ENCODE measurements at regions of chr7 and their contacts with region 1.

Region 1: DNA sequence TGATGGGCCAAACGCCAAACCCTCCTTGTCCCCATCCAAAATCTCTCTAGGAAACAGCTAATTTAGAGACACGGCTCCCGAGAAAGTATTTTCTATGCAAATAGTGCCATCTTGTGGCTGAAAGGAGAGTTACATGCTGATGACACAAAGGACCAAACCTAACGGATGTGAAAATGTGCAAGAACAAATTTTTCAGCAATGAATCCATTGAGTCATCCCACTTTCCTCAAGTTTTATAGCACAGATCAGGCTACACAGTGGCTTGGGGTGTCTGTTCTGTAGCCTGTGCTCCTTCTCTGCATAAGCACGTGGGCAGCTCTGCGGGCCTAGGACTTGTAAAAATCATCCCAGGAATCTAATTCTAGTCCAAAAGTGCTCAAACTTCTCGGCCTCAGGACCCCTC is 154.8 kb upstream of the PRR15 start:
- DNase-seq: peak; percentile 67
- CTCF ChIP-seq: peak; percentile 64

Region 2: DNA sequence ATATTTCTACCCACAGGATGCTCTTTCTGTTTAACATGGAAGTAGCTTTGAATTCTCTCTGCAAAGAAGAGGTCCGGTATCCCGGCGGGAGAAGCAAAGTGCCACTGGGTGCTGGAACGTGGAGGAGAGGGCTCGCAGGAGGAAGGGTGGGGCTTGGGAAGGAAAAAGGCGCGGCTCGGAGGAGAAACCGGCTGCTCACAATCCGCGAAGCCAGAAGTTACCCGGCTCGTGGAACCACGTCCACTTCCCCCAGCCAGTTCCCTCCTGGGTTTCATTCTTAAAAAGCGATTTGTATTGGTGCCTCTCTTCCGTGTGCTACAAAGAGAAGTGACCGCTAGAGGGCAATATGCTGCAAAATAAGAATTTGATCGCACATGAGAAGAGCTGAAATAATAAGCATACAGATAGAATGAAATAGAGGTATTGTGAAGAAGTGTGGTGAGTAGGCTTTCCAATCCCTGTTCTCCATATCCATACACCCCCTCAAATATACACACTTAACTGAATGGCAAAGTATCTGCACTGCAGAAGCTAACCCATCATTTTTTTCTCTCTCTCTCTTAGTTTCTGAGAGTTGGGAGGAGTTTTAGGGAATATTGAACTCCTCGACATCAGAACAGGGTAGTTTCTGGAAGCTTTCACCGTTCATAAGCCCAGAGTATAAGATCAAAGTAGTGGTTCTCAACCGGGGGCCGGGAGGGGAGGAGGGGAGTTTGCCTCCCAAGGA is 481.8 kb before region 1 on chr7:
- in situ Hi-C with region 1: loop called (anchors 10 kb)
- DNase-seq: peak; percentile 80
- CTCF ChIP-seq: peak; percentile 74

Region 3: GRCh38 chr7:29189743-29190201 is 219.1 kb before region 1 on chr7:
- in situ Hi-C with region 1: loop called (anchors 10 kb)
- DNase-seq: peak; percentile 63
- CTCF ChIP-seq: peak; percentile 85

Measured in GM13976 (cell line).